Astrocyte of the cerebellum (primary cell): ENCODE measurements at regions of chr5 and their contacts with region 1.

Region 1: DNA sequence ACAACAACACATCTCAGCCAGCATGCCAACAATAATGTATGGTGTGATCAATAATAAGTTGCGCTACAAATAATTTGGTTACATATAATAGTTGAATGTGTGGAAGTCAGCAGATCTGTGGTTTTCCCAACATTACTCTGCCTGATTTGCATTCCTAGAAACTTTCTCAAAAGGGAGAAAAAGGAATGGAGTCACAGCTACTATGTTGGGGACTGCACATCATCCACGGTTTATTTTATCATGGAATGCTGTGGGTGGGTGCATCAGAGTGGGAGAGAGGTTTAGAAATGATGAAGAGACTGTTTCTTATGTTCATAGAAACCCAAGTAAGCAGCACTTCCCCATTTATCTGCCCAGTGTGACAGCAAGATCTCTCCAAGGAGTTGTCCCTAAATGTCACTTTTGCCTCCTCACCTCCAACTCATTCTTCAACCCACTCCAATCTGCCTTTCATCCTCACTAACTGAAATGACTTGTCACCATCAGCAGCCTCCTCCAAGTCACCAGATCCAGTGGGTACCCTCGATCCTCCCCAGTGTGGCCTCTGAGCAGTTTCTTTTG is 2.8 kb upstream of the SPOCK1 start:
- DNase-seq: no peak
- H3K4me3 ChIP-seq: no peak overlapping the region
- CTCF ChIP-seq: no peak

Region 2: GRCh38 chr5:136802383-136802782 is 699.5 kb before region 1 on chr5:
- in situ Hi-C with region 1: loop called (anchors 25 kb)
- DNase-seq: peak; percentile 20
- H3K4me3 ChIP-seq: no peak overlapping the region
- CTCF ChIP-seq: peak; percentile 46

Region 3: GRCh38 chr5:137320056-137321045 is 181.6 kb before region 1 on chr5:
- in situ Hi-C with region 1: loop called (anchors 5 kb)
- DNase-seq: peak; percentile 74
- H3K4me3 ChIP-seq: no peak overlapping the region
- CTCF ChIP-seq: peak; percentile 90